Spleen (tissue), 13 donors: ENCODE measurements at regions of chr5 and their contacts with region 1.

Region 1: GRCh38 chr5:75239681-75240080 is 3.0 kb upstream of the ANKRD31 start:
- DNase-seq: no peak
- H3K4me3 ChIP-seq: no peak overlapping the region
- H3K27ac ChIP-seq: no peak overlapping the region
- H3K4me1 ChIP-seq: peaks cover 0 to 23% (median 12%) of the 10 kb centered on the region in 6 donors
- H3K27me3 ChIP-seq: no peaks in the 10 kb centered on the region
- CTCF ChIP-seq: no peak
- POLR2A ChIP-seq: no peak

Region 2: DNA sequence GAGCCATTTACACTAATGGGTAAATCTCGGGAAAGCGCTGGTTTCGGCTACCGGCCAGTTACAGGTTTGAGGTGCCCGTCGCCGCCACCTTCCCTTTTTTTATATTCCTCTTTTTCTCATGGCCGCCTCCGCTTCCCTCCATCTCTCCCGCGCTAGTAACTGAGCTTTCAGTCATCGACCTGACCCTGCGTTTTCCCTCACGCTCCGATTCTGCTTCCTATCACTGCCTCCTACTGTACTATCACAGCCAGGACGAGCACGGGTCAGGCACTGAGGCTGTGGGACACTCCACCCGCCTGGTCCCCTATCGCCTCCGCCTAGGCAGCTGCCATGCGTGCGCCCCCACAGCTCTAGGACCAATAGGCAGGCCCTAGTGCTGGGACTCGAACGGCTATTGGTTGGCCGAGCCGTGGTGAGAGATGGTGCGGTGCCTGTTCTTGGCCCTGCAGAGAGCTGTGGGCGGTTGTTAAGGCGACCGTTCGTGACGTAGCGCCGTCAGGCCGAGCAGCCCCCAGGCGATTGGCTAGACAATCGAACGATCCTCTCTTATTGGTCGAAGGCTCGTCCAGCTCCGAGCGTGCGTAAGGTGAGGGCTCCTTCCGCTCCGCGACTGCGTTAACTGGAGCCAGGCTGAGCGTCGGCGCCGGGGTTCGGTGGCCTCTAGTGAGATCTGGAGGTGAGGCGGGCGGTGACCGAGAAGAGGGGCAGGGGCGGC is 97.1 kb after region 1 on chr5 and contains the start of gene HMGCR:
- intact Hi-C with region 1: loop called (anchors 10 kb)
- DNase-seq: peak; percentile 99
- H3K4me3 ChIP-seq: peak within 1 kb of the TSS; percentile 74 to 97 (median 85)
- H3K27ac ChIP-seq: peak within 1 kb of the TSS; percentile 71 to 97 (median 94)
- H3K4me1 ChIP-seq: peaks cover 13 to 50% (median 28%) of the 10 kb centered on the region in 6 donors
- H3K27me3 ChIP-seq: no peaks in the 10 kb centered on the region
- CTCF ChIP-seq: peak in 4 of 11 experiments; percentile 21 to 46 (median 35)
- POLR2A ChIP-seq: peak in 1 of 3 donors; percentile 74
- total RNA-seq, gene HMGCR: 31.6 to 54.7 (median 38.5) TPM

Region 3: GRCh38 chr5:75690669-75691068 is 451.0 kb after region 1 on chr5:
- intact Hi-C with region 1: no loop called
- DNase-seq: no peak
- H3K4me3 ChIP-seq: no peak overlapping the region
- H3K27ac ChIP-seq: no peak overlapping the region
- H3K4me1 ChIP-seq: no peaks in the 10 kb centered on the region
- H3K27me3 ChIP-seq: no peaks in the 10 kb centered on the region
- CTCF ChIP-seq: no peak
- POLR2A ChIP-seq: no peak